Psoas muscle (tissue), 8 donors: ENCODE measurements at regions of chr13 and their contacts with region 1.

Region 1: GRCh38 chr13:60431108-60431700 is 34.2 kb downstream of the TDRD3 start:
- DNase-seq: no peak
- ATAC-seq: peak; percentile 73 to 93 (median 83)
- H3K4me3 ChIP-seq: no peak overlapping the region
- H3K27ac ChIP-seq: no peak overlapping the region
- H3K4me1 ChIP-seq: no peaks in the 10 kb centered on the region
- H3K27me3 ChIP-seq: no peaks in the 10 kb centered on the region
- CTCF ChIP-seq: peak; percentile 97

Region 2: DNA sequence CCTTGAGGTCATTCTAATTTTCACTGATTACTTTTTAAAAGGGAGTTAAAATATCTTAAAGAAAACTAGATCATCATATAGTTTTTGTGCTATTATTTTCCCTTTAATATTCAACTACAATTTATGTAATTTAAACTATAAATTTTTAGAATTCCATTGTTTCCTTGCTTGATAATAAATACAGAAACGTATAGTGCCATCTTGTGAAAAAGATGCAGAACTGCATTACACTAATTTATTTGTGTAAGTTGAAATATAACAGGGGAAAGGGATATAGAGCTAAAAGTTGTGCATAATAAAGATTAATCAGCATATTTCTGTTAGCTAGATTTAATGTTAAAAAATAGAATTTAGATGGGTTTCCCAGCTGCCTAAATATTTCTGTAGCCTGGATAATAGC is 95.7 kb before region 1 on chr13:
- intact Hi-C with region 1: loop called in 1 of 2 experiments (anchors 10 kb)
- DNase-seq: no peak
- ATAC-seq: no peak
- H3K4me3 ChIP-seq: no peak overlapping the region
- H3K27ac ChIP-seq: no peak overlapping the region
- H3K4me1 ChIP-seq: no peaks in the 10 kb centered on the region
- H3K27me3 ChIP-seq: no peaks in the 10 kb centered on the region
- CTCF ChIP-seq: peak; percentile 48